Activated CD4-positive, alpha-beta memory T cell treated with anti-CD3 and anti-CD28 coated beads, Interleukin-2, amount 10 ng/mL, durations not matched to agents 7 days and 5 days (primary cell): ENCODE measurements at regions of chr19 and their contacts with region 1.

Region 1: GRCh38 chr19:9934132-9934950 is 2.0 kb downstream of the OLFM2 start:
- DNase-seq: peak; percentile 85
- H3K4me3 Mint-ChIP-seq: no peak overlapping the region
- H3K27ac Mint-ChIP-seq: no peak overlapping the region
- H3K4me1 Mint-ChIP-seq: peaks cover 13% of the 10 kb centered on the region
- H3K27me3 Mint-ChIP-seq: peaks cover 46% of the 10 kb centered on the region

Region 2: DNA sequence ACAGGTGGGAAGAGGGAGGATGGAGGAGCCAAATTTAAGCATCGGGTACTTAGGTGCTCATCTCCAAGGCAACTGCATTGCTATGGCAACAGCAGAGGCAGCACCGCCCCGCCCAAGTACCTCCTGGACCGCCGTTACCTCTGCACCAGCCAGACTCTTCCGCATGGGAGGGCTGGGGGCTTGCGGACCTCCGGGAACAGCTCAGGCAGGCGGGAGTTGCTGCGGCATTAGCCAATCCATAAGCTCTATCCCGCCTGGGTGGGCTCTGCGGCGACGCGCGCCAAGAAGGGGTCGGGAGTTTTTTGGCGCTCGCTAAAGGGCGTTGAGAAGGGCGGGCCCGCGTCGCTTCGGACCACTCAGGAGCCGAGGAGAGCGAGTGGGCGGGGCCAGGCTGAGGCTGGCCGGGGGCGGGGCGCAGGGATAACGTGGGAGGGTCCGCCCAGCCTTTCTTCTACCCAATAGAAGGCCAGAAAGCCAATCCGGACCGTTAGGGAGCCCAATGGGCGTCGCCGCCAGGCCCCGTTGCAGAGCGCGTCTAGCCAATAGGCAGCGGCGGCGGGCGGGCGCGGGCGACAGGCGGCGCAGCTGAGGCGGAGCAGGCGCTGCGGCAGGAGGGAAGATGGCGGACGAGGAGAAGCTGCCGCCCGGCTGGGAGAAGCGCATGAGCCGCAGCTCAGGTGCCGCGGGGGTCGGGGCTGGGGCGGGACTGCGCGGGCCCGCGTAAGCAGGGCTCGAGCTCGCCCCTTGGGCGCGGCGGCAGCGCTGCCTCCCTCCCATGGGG is 99.4 kb before region 1 on chr19 and contains the start of gene PIN1:
- CTCF ChIA-PET with region 1: no interaction called
- POLR2A ChIA-PET with region 1: no interaction called
- DNase-seq: peak; percentile 99
- H3K4me3 Mint-ChIP-seq: peak within 1 kb of the TSS; percentile 90
- H3K27ac Mint-ChIP-seq: peak within 1 kb of the TSS; percentile 81
- H3K4me1 Mint-ChIP-seq: peaks cover 28% of the 10 kb centered on the region
- H3K27me3 Mint-ChIP-seq: no peaks in the 10 kb centered on the region
- total RNA-seq, gene PIN1: 96.0 to 97.0 TPM

Region 3: DNA sequence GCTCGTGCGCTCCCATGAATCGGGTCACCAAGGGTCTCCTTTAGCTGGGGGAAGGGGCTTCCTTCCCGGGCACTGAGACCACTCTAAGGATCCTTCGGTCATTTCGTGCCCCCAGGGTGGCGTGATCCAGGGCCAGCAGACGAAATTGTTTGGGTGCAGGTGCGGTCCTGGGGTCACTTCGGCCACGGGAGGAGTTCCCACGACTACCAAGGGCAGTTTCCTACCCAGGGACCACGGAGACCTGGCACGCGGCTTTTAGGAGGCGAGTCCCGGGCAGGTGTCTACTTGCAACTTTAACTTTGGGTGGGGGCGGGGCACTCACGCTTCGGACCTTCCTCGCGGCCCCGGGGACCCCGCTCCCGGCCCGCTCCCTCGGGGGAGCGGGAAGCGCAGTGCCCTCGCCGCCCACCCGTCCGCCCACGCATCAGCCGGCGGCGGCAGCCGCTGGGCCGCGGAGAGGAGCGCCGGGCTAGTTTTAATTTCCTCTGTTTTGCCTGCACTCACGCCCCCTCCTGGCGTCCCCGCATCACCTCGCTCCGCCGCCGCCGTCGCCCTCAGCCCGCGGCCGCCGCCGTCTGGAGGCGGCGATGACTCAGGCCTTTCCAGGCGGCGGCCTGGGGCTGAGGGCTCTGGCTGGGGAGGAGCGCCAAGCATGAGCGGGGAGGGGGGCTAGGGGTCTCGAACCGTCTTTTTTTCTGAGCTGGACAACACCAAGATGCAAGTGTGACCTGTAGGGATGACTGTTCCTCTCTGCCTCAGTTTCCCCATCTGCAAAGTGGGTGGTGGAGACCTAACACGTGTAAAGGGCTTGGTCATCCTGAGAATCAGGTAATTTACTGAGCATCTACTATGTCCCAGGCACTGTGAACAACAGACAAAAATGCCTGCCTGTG is 19.8 kb before region 1 on chr19:
- CTCF ChIA-PET with region 1: interaction called, 14 read pairs
- POLR2A ChIA-PET with region 1: no interaction called
- DNase-seq: peak; percentile 87
- H3K4me3 Mint-ChIP-seq: peak overlapping the region; percentile 46
- H3K27ac Mint-ChIP-seq: no peak overlapping the region
- H3K4me1 Mint-ChIP-seq: peaks cover 15% of the 10 kb centered on the region
- H3K27me3 Mint-ChIP-seq: peaks cover 31% of the 10 kb centered on the region

Region 4: GRCh38 chr19:9945319-9945966 is 11.1 kb after region 1 on chr19:
- CTCF ChIA-PET with region 1: no interaction called
- POLR2A ChIA-PET with region 1: no interaction called
- DNase-seq: no peak
- H3K4me3 Mint-ChIP-seq: no peak overlapping the region
- H3K27ac Mint-ChIP-seq: no peak overlapping the region
- H3K4me1 Mint-ChIP-seq: no peaks in the 10 kb centered on the region
- H3K27me3 Mint-ChIP-seq: peaks cover 8% of the 10 kb centered on the region

Region 5: DNA sequence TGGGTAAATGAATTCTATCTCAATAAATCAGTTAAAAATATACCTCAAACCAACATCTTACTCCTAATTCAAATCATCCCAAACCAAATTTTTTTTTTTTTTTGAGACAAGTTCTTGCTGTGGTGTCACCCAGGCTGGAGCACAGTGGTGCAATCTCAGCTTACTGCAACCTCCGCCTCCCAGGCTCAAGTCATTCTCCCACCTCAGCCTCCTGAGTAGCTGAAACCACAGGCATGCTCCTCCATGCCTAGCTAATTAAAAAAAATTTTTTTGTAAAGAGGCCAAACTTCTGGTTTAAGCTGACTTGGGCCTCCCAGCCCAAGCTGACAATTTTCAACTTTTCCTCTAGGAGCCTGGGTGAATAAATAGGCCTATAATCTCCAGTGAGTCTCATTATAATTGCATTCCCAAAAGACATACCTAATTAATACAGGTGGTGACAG is 24.1 kb after region 1 on chr19:
- CTCF ChIA-PET with region 1: no interaction called
- POLR2A ChIA-PET with region 1: no interaction called
- DNase-seq: no peak
- H3K4me3 Mint-ChIP-seq: no peak overlapping the region
- H3K27ac Mint-ChIP-seq: no peak overlapping the region
- H3K4me1 Mint-ChIP-seq: no peaks in the 10 kb centered on the region
- H3K27me3 Mint-ChIP-seq: peaks cover 2% of the 10 kb centered on the region

Region 6: DNA sequence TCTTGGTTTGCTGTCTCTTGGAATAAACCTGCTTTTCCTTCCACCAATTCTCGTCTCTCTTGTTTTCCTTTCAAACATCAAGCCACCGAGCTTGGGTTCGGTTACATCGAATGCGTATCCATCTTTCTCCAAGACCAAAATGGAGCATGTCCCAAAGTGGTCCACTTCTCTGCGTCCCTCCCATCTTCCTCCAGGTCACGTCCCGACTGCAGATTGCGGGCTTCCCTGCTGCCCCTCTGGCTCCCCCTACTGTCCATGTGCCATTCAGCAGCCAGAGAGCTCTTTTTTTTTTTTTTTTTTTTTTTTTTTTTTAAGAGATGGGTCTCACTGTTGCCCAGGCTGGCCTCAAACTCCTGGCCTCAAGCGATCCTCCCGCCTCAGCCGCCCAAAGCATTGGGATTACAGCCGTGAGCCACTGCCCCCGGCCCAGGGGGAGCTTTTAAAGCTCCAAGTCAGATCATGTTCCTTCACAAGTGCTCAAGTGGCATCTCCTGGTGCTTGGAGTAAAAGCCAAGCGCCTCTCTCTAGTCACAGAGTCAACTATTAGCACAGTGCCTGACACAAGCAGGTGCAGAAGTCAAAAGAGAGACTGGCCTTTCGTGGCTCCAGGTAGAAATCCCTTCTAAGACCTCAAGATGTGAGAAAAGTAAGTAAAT is 66.0 kb after region 1 on chr19:
- CTCF ChIA-PET with region 1: interaction called, 18 read pairs
- POLR2A ChIA-PET with region 1: no interaction called
- DNase-seq: peak; percentile 73
- H3K4me3 Mint-ChIP-seq: no peak overlapping the region
- H3K27ac Mint-ChIP-seq: no peak overlapping the region
- H3K4me1 Mint-ChIP-seq: peaks cover 14% of the 10 kb centered on the region
- H3K27me3 Mint-ChIP-seq: peaks cover 10% of the 10 kb centered on the region

Region 7: DNA sequence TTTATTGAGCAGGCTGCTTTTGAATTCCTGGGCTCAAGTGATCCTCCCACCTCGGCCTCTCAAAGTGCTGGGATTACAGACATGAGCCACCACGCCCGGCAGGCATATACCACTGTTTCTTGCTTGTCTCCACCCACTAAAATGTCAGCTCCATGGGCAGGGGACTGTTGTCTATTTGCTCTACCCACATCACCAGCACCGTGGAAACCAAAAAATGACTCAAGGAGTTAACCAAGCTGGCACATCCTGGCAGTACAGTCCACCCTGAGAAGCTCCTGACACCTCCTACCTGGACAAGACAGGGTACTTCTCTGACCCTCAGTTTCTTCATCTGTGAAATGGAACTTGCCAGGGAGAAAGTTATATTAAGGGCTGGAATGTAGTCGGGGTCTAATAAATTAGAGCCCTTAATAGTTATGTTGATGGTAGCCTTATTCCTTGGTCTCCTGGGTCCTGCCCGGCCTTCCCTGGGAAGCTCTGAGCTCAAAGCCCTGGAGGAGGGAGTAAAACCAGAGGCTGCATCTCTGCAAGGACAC is 92.9 kb after region 1 on chr19:
- CTCF ChIA-PET with region 1: interaction called, 45 read pairs
- POLR2A ChIA-PET with region 1: no interaction called
- DNase-seq: no peak
- H3K4me3 Mint-ChIP-seq: no peak overlapping the region
- H3K27ac Mint-ChIP-seq: no peak overlapping the region
- H3K4me1 Mint-ChIP-seq: no peaks in the 10 kb centered on the region
- H3K27me3 Mint-ChIP-seq: peaks cover 12% of the 10 kb centered on the region

Region 8: GRCh38 chr19:10112895-10113591 is 178.7 kb after region 1 on chr19:
- CTCF ChIA-PET with region 1: interaction called, 23 read pairs
- POLR2A ChIA-PET with region 1: no interaction called
- DNase-seq: peak; percentile 74
- H3K4me3 Mint-ChIP-seq: peak overlapping the region; percentile 70
- H3K27ac Mint-ChIP-seq: peak overlapping the region; percentile 95
- H3K4me1 Mint-ChIP-seq: peaks cover 64% of the 10 kb centered on the region
- H3K27me3 Mint-ChIP-seq: no peaks in the 10 kb centered on the region